ENCODE measurements at regions of chr1 and their contacts with region 1.

Region 1: DNA sequence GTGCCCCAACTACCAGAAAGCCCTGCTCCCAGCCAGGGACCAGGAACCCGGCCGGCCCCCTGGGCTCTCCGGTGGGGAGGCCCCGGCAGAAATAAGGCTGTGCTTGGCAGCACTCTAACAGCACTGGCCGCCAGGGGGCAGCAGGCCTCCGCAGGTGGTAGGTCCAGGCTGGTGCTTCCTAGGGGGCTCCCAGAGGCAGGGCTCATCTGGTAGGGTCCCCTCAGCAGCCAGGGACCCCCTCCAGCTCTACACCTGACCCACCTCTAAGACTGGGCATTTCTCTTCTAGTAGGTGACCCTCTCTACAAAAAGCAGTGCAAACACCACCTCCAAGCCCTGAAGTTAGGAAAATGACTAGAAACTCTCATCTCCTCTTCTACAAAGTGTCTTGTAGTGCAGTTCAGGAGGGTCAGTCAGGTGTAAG is 85.6 kb downstream of the STUM start:
- DNase-seq: peak; percentile 91
- ATAC-seq: peak; percentile 84
- H3K4me3 ChIP-seq: no peak overlapping the region
- H3K27ac ChIP-seq: no peak overlapping the region
- H3K4me1 ChIP-seq: peaks cover 12% of the 10 kb centered on the region
- H3K27me3 ChIP-seq: no peaks in the 10 kb centered on the region
- CTCF ChIP-seq: peak; percentile 97

Region 2: DNA sequence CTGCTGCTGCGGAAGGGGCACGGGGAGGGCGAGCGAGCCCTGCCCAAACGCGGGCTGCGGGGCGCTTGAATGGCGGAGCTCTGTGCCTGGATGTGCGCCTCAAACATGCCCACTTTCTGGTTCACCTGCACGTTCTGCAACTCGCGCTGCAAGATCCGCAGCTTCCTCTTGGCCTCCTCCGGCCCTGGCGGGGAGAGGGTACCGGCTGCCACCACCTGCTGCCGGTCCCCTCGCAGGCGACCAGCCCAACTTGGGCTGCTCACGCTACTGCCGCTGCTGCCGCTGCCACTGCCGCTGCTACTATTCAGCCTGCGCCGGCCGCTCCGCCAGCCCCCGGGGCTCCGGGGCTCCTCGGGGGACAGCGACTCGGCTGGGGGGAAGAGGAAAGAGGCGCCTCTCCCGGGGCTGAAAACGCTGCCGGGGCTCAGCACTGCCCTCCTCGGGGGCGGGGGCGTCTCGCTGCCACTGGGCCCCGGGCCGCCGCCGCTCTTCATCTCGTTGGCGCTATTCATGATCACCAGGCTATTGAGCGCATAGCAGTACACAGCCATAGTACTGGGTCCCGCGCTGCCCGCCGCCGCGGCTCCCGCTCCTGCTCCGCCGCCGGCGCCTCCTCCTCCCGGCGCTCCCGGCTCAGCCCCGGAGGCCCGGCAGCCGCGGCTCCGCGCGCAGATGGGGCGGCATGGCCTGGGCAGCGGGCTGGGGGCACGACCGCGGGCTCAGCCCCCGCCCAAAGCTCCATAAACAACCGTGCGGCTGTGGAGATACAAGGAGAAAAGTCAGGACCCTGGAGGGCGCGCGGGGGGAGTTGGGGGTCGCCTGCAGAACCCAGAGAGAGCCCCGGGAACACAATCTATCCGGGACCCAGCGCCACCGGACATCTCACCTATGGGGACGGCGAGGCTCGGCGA is 103.0 kb after region 1 on chr1:
- intact Hi-C with region 1: loop called (anchors 10 kb)
- DNase-seq: peak; percentile 74
- ATAC-seq: peak; percentile 57
- H3K4me3 ChIP-seq: peak overlapping the region; percentile 96
- H3K27ac ChIP-seq: peak overlapping the region; percentile 86
- H3K4me1 ChIP-seq: peaks cover 43% of the 10 kb centered on the region
- H3K27me3 ChIP-seq: no peaks in the 10 kb centered on the region
- CTCF ChIP-seq: peak; percentile 19

Region 3: DNA sequence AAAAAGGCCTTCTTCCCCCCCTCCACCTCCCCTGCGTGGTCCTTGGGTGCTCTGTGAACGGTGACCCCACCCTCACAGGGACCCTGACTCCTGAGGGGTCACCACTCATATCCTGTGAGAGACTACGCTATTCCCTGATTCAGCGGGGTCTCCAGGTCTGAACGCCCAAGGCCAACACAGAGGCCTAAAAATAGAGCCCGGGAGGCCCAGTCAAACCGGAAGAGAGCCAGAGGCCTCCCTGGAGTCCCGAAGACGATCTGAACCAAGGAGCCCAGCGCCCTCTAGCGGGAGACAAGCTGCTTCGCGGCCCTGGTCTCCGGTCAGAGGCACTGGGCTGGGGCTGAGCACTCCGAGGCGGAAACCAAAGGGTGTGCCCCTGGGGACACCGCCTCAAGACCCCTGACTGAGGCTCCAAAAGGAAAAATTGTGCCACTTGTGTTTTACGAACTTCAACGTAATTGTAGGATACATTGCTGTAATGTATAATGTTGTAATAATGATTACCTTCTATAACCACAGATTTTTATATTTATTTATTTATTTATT is 193.9 kb after region 1 on chr1:
- intact Hi-C with region 1: loop called (anchors 5 kb)
- DNase-seq: peak; percentile 96
- ATAC-seq: peak; percentile 99
- H3K4me3 ChIP-seq: no peak overlapping the region
- H3K27ac ChIP-seq: peak overlapping the region; percentile 72
- H3K4me1 ChIP-seq: peaks cover 12% of the 10 kb centered on the region
- H3K27me3 ChIP-seq: no peaks in the 10 kb centered on the region
- CTCF ChIP-seq: peak; percentile 97

Measured in upper lobe of right lung (tissue), 1 donor.